ENCODE measurements at regions of chr16 and their contacts with region 1.

Region 1: GRCh38 chr16:88811769-88812512 is at the start of gene APRT:
- DNase-seq: peak; percentile 94 to 98
- ATAC-seq: peak; percentile 90 to 93 (median 93)
- H3K4me3 ChIP-seq: peak within 1 kb of the TSS; percentile 88
- H3K27ac ChIP-seq: peak within 1 kb of the TSS; percentile 93
- H3K4me1 ChIP-seq: peaks cover 13% of the 10 kb centered on the region
- H3K27me3 ChIP-seq: no peaks in the 10 kb centered on the region
- CTCF ChIP-seq: peak; percentile 34
- total RNA-seq, gene APRT: 32.8 to 67.7 (median 55.0) TPM

Region 2: DNA sequence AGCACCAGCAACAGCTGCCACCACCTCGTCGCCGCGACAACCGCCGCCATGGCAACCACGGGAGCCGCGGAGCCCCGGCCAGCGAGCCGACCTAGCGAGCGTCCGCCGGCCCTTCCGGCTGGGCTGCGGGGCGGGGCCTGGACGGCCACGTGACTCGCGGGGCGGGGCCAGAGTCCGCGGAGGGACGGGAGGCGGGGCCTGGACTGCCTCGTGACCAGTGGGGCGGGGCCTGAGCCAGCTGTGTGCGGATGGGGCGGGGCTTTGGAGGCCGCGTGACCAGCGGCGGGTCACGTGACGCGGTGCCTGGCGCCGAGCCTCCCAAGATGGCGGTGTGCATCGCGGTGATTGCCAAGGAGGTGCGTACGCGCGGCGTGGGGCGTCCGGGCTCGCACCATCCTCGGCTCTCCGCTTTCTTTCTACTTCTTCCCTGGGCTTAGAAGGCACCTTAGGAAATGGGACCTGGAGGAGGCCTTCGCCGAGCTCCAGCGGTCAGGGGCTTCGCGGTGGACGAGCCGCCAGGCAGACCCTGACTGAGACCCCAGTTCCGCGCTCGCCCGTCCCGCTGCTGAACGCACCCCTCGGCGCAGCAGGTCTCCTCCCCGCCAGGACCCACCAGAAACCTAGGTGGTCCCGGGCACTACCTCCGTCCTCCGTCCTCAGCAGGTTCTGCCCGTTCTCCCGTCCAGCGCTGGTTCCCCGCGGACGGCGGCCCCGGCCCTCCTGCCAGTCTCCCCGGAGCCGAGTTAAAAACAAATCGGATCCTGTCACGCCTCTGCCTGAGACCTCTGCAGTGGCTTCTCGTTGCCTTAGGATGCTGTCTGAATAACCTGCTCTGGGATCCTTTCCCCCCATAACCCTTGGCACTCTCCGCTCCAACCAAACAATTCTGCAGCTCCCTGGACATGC is 45.1 kb after region 1 on chr16 and contains the starts of genes GALNS and TRAPPC2L:
- intact Hi-C with region 1: loop called in 1 of 2 experiments (anchors 5 kb)
- DNase-seq: peak; percentile 99 to 100
- ATAC-seq: peak; percentile 95 to 99 (median 98)
- H3K4me3 ChIP-seq: peak within 1 kb of the TSS; percentile 93
- H3K27ac ChIP-seq: peak within 1 kb of the TSS; percentile 84
- H3K4me1 ChIP-seq: peaks cover 13% of the 10 kb centered on the region
- H3K27me3 ChIP-seq: no peaks in the 10 kb centered on the region
- CTCF ChIP-seq: no peak
- total RNA-seq, gene GALNS: 4.8 to 10.4 (median 9.7) TPM
- total RNA-seq, gene TRAPPC2L: 38.6 to 42.6 (median 38.7) TPM

Region 3: GRCh38 chr16:88914750-88915368 is 102.9 kb after region 1 on chr16:
- intact Hi-C with region 1: loop called (anchors 2 to 10 kb)
- DNase-seq: peak; percentile 59 to 81
- ATAC-seq: peak; percentile 51 to 72 (median 60)
- H3K4me3 ChIP-seq: no peak overlapping the region
- H3K27ac ChIP-seq: no peak overlapping the region
- H3K4me1 ChIP-seq: no peaks in the 10 kb centered on the region
- H3K27me3 ChIP-seq: peaks cover 0 to 3% (median 0%) of the 10 kb centered on the region in 3 donors
- CTCF ChIP-seq: no peak

Region 4: GRCh38 chr16:89093602-89094251 is 281.8 kb after region 1 on chr16 and contains the start of gene ACSF3:
- intact Hi-C with region 1: loop called (anchors 5 to 10 kb)
- DNase-seq: peak; percentile 74 to 83
- ATAC-seq: peak; percentile 83 to 95 (median 94)
- H3K4me3 ChIP-seq: peak within 1 kb of the TSS; percentile 95
- H3K27ac ChIP-seq: peak within 1 kb of the TSS; percentile 72
- H3K4me1 ChIP-seq: peaks cover 16% of the 10 kb centered on the region
- H3K27me3 ChIP-seq: peaks cover 0 to 9% (median 3%) of the 10 kb centered on the region in 3 donors
- CTCF ChIP-seq: no peak
- total RNA-seq, gene ACSF3: 16.2 to 26.5 (median 19.1) TPM

Region 5: DNA sequence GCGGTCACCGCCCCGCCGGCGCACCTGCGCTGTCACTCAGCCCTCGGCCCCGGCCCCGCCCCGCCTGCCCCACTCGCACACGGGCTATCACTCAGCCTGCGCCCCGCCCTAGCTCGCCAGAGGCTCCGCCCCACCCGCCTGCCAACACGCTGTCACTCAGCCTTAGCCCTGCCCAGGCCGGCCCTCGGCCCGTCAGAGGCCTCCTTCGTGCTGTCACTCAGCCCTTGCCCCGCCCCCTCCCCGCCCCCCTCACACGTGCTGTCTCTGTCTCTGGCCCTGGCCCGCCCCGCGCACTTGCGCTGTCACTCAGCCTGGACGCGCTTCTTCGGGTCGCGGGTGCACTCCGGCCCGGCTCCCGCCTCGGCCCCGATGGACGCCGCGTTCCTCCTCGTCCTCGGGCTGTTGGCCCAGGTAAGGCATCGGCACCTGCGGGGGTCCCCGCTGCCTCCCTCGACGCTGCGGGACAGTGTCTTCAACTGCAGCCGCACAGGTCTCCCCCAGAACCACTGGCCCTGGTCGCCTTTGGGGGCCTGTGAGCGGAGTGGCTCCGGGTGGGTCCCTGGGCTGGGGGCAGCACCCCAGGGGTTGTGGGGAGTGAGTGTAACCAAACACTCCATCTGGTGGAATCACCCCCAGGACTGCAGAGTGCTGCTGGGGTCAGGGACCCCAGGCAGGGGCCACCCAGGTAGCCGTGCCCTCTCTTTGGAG is 359.7 kb after region 1 on chr16 and contains the start of gene CDH15:
- intact Hi-C with region 1: loop called (anchors 2 to 5 kb)
- DNase-seq: peak; percentile 94 to 99
- ATAC-seq: peak; percentile 86 to 91 (median 88)
- H3K4me3 ChIP-seq: peak within 1 kb of the TSS; percentile 87
- H3K27ac ChIP-seq: peak within 1 kb of the TSS; percentile 95
- H3K4me1 ChIP-seq: peaks cover 43% of the 10 kb centered on the region
- H3K27me3 ChIP-seq: peaks cover 0 to 16% (median 0%) of the 10 kb centered on the region in 3 donors
- CTCF ChIP-seq: no peak
- total RNA-seq, gene CDH15: 36.7 to 62.8 (median 51.1) TPM

Region 6: DNA sequence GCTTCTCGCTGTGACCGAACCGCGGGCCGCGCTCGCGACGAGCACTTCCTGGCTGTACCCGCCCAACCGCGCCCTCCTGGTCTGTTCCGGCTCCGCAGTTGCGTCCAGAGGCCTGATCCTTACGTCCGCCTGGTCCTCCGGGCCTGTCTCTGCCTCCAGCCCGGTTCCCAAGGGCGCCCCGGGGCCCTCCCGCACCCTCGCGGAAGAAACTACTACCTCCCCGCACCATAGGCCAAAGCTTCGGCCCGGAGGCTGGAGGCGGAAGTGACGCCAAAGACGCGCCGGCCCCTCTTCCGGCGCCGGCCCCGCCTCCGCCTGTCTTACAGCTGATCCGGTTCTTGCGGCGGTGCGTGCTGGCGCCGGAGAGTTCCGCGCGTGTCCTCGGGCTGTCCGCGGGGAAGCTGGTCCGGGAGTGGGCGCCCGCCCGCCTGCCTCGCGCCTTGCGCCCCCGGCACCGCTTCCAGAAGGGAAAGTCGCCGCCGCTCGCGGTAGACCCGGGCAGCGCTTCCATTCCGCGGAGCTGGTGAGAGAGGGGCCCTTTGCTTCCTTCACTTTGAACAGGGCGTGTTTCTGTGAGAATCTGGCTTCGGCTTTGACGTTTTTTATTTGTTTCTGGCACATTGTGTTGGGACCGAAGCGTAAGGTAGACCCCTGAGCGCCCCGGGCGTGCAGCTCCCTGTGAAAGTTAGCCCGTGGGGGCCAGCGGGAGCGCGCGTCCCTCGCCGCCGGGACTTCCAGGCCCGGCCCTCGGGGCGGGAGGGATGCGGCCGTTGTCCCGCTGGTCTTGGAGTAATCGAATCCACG is 405.6 kb after region 1 on chr16 and contains the start of gene ZNF778:
- intact Hi-C with region 1: loop called in 1 of 2 experiments (anchors 5 kb)
- DNase-seq: peak; percentile 85 to 92
- ATAC-seq: peak; percentile 91 to 94 (median 92)
- H3K4me3 ChIP-seq: peak within 1 kb of the TSS; percentile 81
- H3K27ac ChIP-seq: peak within 1 kb of the TSS; percentile 96
- H3K4me1 ChIP-seq: peaks cover 32% of the 10 kb centered on the region
- H3K27me3 ChIP-seq: no peaks in the 10 kb centered on the region
- CTCF ChIP-seq: peak; percentile 10
- total RNA-seq, gene ZNF778: 10.2 to 15.3 (median 12.4) TPM

Measured in psoas muscle (tissue), 8 donors.